ENCODE measurements at regions of chr11 and their contacts with region 1.

Region 1: DNA sequence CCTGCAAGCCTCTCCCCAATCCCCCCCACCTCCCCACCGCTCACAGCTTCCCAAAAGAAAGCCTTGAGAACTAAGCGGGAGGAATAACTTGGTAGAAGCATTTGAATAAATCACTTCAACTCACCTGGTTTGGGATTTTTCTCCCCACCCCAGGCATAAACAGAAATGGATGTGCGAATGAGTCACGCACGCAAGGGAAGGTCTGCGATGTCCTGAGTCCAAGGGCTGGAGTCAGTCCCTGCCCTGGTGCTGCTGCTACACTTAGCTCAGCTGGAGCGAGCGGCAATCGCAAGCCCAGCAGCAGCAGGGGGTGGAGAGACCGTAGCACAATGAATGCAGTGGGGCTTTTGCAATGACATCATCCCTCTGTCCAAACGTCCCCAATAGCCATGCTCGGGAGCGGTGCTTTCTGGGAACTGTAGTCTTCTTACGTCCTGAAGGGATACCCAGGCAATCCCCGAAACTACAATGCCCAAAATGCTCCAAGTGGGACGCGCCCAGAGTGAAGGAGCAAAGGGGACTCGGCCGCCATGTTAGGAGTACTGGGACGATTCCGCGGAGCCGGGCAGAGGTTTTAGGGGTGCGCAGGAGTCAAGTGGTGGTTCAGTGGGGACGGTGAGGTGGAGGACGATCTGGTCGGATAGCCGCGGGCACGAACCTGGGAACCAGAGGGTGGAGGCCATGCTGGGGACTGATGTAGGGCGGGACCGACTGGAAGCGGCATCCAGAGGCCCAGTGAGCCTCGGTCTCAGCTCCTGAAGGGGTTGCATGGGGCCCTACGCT is at the start of gene RAB30:
- DNase-seq: peak; percentile 84 to 99 (median 91)
- ATAC-seq: peak; percentile 94
- H3K4me3 ChIP-seq: peak within 1 kb of the TSS; percentile 86 to 91
- H3K4me3 Mint-ChIP-seq: no peak within 1 kb of the TSS
- H3K27ac ChIP-seq: peak within 1 kb of the TSS; percentile 91 to 96
- H3K27ac Mint-ChIP-seq: no peak within 1 kb of the TSS
- H3K4me1 ChIP-seq: peaks cover 34% of the 10 kb centered on the region
- H3K4me1 Mint-ChIP-seq: peaks cover 16% of the 10 kb centered on the region
- H3K27me3 ChIP-seq: no peaks in the 10 kb centered on the region
- H3K27me3 Mint-ChIP-seq: no peaks in the 10 kb centered on the region
- CTCF ChIP-seq: no peak
- total RNA-seq, gene RAB30: 125 to 134 TPM

Region 2: GRCh38 chr11:81869351-81870065 is 1202.2 kb before region 1 on chr11:
- CTCF ChIA-PET with region 1: no interaction called
- POLR2A ChIA-PET with region 1: no interaction called
- intact Hi-C with region 1: loop called in 1 of 2 experiments (anchors 5 kb)
- DNase-seq: peak; percentile 58 to 96 (median 78)
- ATAC-seq: peak; percentile 82
- H3K4me3 ChIP-seq: peak overlapping the region; percentile 30 to 31
- H3K4me3 Mint-ChIP-seq: peak overlapping the region; percentile 89
- H3K27ac ChIP-seq: peak overlapping the region; percentile 39 to 65
- H3K27ac Mint-ChIP-seq: peak overlapping the region; percentile 97
- H3K4me1 ChIP-seq: peaks cover 45% of the 10 kb centered on the region
- H3K4me1 Mint-ChIP-seq: peaks cover 52% of the 10 kb centered on the region
- H3K27me3 ChIP-seq: no peaks in the 10 kb centered on the region
- H3K27me3 Mint-ChIP-seq: no peaks in the 10 kb centered on the region
- CTCF ChIP-seq: no peak

Region 3: DNA sequence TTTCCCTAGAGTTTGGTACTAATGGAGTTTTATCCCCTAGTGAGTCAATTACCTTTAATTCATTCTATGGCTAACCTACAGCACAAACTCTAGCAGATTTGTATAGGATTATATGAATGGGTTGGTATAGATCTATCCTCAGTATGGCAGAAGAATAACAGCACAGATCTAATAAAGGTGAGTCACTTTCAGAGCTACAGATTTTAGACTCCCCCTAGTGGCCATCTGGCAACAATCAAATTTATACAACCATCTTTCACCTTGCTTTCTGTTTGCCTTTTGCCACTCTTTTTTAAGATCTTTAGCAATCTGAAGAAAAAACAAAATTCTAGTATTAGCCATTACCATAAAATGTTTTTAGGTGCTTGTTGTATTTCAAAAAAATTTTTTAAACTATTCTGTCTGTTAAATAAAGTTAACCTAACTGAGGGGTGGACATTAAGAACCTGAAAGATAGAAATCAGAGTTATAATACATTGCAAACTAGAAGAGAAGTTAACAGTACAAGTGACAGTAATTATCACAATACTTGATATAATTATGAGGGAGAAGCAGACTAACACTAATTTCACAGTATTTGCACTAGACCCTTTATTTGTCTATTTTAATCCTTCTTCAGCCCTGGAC is 144.4 kb before region 1 on chr11:
- CTCF ChIA-PET with region 1: no interaction called
- POLR2A ChIA-PET with region 1: interaction called, 3 read pairs
- intact Hi-C with region 1: loop called (anchors 2 to 5 kb)
- DNase-seq: peak in 6 of 9 experiments; percentile 11 to 83 (median 31)
- ATAC-seq: peak; percentile 98
- H3K4me3 ChIP-seq: no peak overlapping the region
- H3K4me3 Mint-ChIP-seq: peak overlapping the region; percentile 26
- H3K27ac ChIP-seq: no peak overlapping the region
- H3K27ac Mint-ChIP-seq: peak overlapping the region; percentile 60
- H3K4me1 ChIP-seq: peaks cover 40% of the 10 kb centered on the region
- H3K4me1 Mint-ChIP-seq: peaks cover 53% of the 10 kb centered on the region
- H3K27me3 ChIP-seq: no peaks in the 10 kb centered on the region
- H3K27me3 Mint-ChIP-seq: no peaks in the 10 kb centered on the region
- CTCF ChIP-seq: peak; percentile 89

Region 4: DNA sequence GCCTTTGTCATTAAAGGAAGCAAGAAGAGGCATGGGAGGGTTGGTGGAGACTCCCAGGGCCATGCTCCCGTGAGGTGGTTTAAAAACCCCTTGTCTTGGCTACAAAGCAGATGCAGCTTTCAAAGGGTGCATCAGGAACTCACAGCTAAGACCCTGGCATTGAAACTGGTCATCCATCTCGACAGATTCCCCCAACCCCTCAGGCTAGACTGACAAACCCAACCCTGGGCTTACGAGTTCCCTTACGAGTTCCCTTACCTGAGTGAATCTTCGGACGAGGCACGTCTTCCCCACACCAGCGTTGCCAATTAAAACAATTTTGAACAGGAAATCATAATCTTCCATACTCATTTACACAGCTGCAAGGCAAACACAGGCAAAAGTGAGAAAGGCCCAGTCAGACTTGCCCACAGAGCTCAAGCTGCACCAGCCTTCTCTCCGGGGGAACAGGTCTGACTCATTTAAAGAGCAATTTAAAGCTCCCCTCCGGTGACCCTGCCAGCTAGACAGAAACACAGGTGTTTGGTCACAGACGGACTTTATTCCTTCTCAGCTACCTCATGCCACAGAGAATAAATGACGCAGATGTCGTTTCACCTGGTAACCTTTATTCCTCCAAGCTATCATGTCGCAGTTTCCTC is 74.7 kb before region 1 on chr11:
- CTCF ChIA-PET with region 1: no interaction called
- POLR2A ChIA-PET with region 1: no interaction called
- intact Hi-C with region 1: loop called in 1 of 2 experiments (anchors 5 kb)
- DNase-seq: no peak
- ATAC-seq: peak; percentile 17
- H3K4me3 ChIP-seq: no peak overlapping the region
- H3K4me3 Mint-ChIP-seq: no peak overlapping the region
- H3K27ac ChIP-seq: no peak overlapping the region
- H3K27ac Mint-ChIP-seq: no peak overlapping the region
- H3K4me1 ChIP-seq: peaks cover 28% of the 10 kb centered on the region
- H3K4me1 Mint-ChIP-seq: peaks cover 39% of the 10 kb centered on the region
- H3K27me3 ChIP-seq: no peaks in the 10 kb centered on the region
- H3K27me3 Mint-ChIP-seq: no peaks in the 10 kb centered on the region
- CTCF ChIP-seq: no peak

Region 5: GRCh38 chr11:83039566-83039965 is 32.2 kb before region 1 on chr11:
- CTCF ChIA-PET with region 1: no interaction called
- POLR2A ChIA-PET with region 1: no interaction called
- intact Hi-C with region 1: no loop called
- DNase-seq: no peak
- ATAC-seq: no peak
- H3K4me3 ChIP-seq: no peak overlapping the region
- H3K4me3 Mint-ChIP-seq: no peak overlapping the region
- H3K27ac ChIP-seq: no peak overlapping the region
- H3K27ac Mint-ChIP-seq: peak overlapping the region; percentile 33
- H3K4me1 ChIP-seq: peaks cover 17% of the 10 kb centered on the region
- H3K4me1 Mint-ChIP-seq: peaks cover 63% of the 10 kb centered on the region
- H3K27me3 ChIP-seq: no peaks in the 10 kb centered on the region
- H3K27me3 Mint-ChIP-seq: no peaks in the 10 kb centered on the region
- CTCF ChIP-seq: no peak

Region 6: DNA sequence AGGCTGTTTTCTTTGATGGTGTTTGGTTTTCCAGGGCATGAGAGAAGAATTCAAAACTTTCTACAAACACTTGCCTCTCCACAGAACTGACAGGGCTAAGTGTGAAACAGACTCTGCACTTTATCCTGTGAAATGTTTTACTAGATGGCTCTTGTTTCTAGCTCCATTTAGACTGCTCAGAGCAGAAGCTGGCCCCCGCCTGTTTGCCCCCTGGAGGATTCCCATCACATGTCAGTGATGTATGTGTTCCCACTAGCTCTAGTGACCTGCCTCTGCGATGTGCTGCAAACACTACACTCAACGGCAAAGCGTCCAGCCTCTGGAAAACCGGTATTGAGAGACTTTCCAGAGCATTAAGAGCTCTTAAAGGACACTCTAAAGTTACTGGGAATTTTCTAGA is 43.8 kb after region 1 on chr11:
- CTCF ChIA-PET with region 1: interaction called, 3 read pairs
- POLR2A ChIA-PET with region 1: interaction called, 3 read pairs
- intact Hi-C with region 1: loop called (anchors 2 to 5 kb)
- DNase-seq: no peak
- ATAC-seq: no peak
- H3K4me3 ChIP-seq: peak overlapping the region in 1 of 2 experiments; percentile 15
- H3K4me3 Mint-ChIP-seq: peak overlapping the region; percentile 74
- H3K27ac ChIP-seq: no peak overlapping the region
- H3K27ac Mint-ChIP-seq: no peak overlapping the region
- H3K4me1 ChIP-seq: peaks cover 44% of the 10 kb centered on the region
- H3K4me1 Mint-ChIP-seq: peaks cover 55% of the 10 kb centered on the region
- H3K27me3 ChIP-seq: no peaks in the 10 kb centered on the region
- H3K27me3 Mint-ChIP-seq: no peaks in the 10 kb centered on the region
- CTCF ChIP-seq: no peak

Region 7: GRCh38 chr11:83193315-83194280 is 121.8 kb after region 1 on chr11 and contains the start of gene ANKRD42:
- CTCF ChIA-PET with region 1: interaction called, 3 read pairs
- POLR2A ChIA-PET with region 1: no interaction called
- intact Hi-C with region 1: loop called (anchors 1 to 2 kb)
- DNase-seq: peak; percentile 53 to 96 (median 86)
- ATAC-seq: peak; percentile 67
- H3K4me3 ChIP-seq: peak within 1 kb of the TSS; percentile 70 to 94
- H3K4me3 Mint-ChIP-seq: peak within 1 kb of the TSS; percentile 100
- H3K27ac ChIP-seq: peak within 1 kb of the TSS; percentile 97 to 98
- H3K27ac Mint-ChIP-seq: peak within 1 kb of the TSS; percentile 100
- H3K4me1 ChIP-seq: peaks cover 30% of the 10 kb centered on the region
- H3K4me1 Mint-ChIP-seq: peaks cover 50% of the 10 kb centered on the region
- H3K27me3 ChIP-seq: no peaks in the 10 kb centered on the region
- H3K27me3 Mint-ChIP-seq: no peaks in the 10 kb centered on the region
- CTCF ChIP-seq: no peak
- total RNA-seq, gene ANKRD42: 11.4 to 12.7 TPM

Region 8: DNA sequence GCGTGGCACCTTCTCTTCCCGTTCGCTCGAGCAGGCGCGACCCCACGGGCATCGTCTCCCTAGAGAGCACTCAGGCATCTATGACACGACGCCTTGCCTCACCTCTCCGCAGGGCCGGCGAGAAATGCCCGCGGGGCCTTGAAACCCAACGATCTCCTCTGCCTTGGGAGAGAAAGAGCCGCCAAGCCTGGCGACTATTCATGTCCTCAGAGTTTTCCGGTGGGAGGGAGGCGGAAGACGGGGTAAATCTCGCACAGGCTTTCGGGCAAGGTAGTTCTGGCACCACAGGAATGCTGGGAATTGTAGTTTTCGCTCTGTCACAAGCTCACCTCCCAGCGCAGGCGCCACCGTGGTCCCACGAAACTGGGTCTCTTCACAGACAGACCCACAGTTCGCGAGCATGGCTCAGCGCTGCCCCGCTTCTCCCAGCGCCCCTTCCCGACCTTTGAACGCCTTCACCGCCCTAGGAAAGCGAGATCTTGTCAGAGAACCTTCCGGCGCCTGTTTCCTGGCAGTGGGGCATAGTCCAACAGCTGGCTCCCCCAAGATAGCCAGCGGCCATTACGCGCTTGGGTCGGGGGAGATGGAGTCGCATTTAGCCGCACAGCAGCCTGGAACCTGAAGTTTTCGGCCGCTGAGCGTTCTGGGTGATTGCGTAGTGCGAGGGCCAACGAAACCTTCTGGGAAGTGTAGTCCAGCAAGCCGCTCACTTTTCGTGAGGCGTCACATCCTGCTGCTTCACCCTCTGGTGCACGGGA is 214.2 kb after region 1 on chr11 and contains the start of gene CCDC90B:
- CTCF ChIA-PET with region 1: no interaction called
- POLR2A ChIA-PET with region 1: interaction called, 4 read pairs
- intact Hi-C with region 1: loop called (anchors 1 kb)
- DNase-seq: peak; percentile 87 to 99 (median 94)
- ATAC-seq: peak; percentile 89
- H3K4me3 ChIP-seq: peak within 1 kb of the TSS; percentile 78 to 86
- H3K4me3 Mint-ChIP-seq: peak within 1 kb of the TSS; percentile 98
- H3K27ac ChIP-seq: peak within 1 kb of the TSS; percentile 88 to 99
- H3K27ac Mint-ChIP-seq: peak within 1 kb of the TSS; percentile 100
- H3K4me1 ChIP-seq: peaks cover 23% of the 10 kb centered on the region
- H3K4me1 Mint-ChIP-seq: peaks cover 46% of the 10 kb centered on the region
- H3K27me3 ChIP-seq: no peaks in the 10 kb centered on the region
- H3K27me3 Mint-ChIP-seq: no peaks in the 10 kb centered on the region
- CTCF ChIP-seq: no peak
- total RNA-seq, gene CCDC90B: 22.7 to 24.8 TPM

Measured in CD8-positive, alpha-beta T cell (primary cell).